Heart right ventricle (tissue), 16 donors: ENCODE measurements at regions of chr17 and their contacts with region 1.

Region 1: GRCh38 chr17:27293898-27294688 is at the start of gene WSB1:
- DNase-seq: peak; percentile 93 to 95
- ATAC-seq: peak; percentile 96 to 98 (median 98)
- H3K4me3 ChIP-seq: peak within 1 kb of the TSS; percentile 77 to 98 (median 92)
- H3K27ac ChIP-seq: peak within 1 kb of the TSS; percentile 87 to 100 (median 100)
- H3K4me1 ChIP-seq: peaks cover 3 to 45% (median 36%) of the 10 kb centered on the region in 9 donors
- H3K27me3 ChIP-seq: no peaks in the 10 kb centered on the region
- CTCF ChIP-seq: peak in 1 of 9 donors; percentile 12
- total RNA-seq, gene WSB1: 50.0 to 94.2 (median 60.5) TPM

Region 2: GRCh38 chr17:27226615-27227230 is 67.4 kb before region 1 on chr17:
- intact Hi-C with region 1: no loop called
- DNase-seq: no peak
- ATAC-seq: no peak
- H3K4me3 ChIP-seq: no peak overlapping the region
- H3K27ac ChIP-seq: no peak overlapping the region
- H3K4me1 ChIP-seq: no peaks in the 10 kb centered on the region
- H3K27me3 ChIP-seq: peaks cover 0 to 10% (median 0%) of the 10 kb centered on the region in 7 donors
- CTCF ChIP-seq: no peak

Region 3: DNA sequence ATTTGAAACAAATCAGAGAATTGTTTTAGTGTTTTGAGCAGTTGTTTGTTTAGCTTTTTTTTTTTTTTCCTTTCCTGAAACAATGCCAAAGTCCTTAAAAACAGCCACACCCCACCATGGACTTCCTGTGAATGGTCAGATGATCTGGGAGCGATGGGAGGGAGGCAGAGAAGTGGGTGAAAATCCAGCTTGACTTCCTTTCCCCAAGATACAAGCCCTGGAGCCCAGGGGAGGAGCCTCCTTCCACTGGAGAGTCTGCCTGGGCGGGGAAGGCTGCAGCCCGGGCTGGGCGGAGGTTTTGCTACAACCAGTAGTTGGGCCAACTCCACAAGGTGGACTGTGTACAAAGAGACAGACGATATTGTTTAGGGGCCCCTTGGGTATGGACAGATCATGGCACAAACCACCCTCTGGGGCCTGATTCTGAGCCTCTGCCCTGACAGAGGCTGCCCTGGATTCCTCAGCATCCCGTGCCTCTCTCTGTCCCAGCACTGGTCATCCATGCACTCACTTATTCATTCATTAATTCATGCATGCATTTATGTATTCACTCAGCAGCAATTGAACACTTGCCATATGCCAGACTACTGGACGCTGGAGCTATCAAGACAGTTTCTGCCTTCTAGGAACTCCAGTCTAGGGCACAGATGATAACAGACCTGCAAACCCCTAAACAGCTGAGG is 29.6 kb after region 1 on chr17:
- intact Hi-C with region 1: loop called in 1 of 10 experiments (anchors 2 kb)
- DNase-seq: peak; percentile 84 to 87
- ATAC-seq: peak; percentile 68 to 92 (median 84)
- H3K4me3 ChIP-seq: no peak overlapping the region
- H3K27ac ChIP-seq: peak overlapping the region in 9 of 10 donors; percentile 14 to 77 (median 52)
- H3K4me1 ChIP-seq: peaks cover 18 to 67% (median 46%) of the 10 kb centered on the region in 9 donors
- H3K27me3 ChIP-seq: no peaks in the 10 kb centered on the region
- CTCF ChIP-seq: no peak